ENCODE measurements at regions of chr10 and their contacts with region 1.

Region 1: GRCh38 chr10:43689955-43690771 is 41.5 kb upstream of the ZNF32 start:
- DNase-seq: peak; percentile 67 to 85
- H3K4me3 ChIP-seq: peak overlapping the region; percentile 42 to 76 (median 56)
- H3K27ac ChIP-seq: peak overlapping the region; percentile 82 to 87
- H3K4me1 ChIP-seq: no peaks in the 10 kb centered on the region
- H3K27me3 ChIP-seq: no peaks in the 10 kb centered on the region
- CTCF ChIP-seq: peak; percentile 85 to 97 (median 88)
- POLR2A ChIP-seq: no peak

Region 2: DNA sequence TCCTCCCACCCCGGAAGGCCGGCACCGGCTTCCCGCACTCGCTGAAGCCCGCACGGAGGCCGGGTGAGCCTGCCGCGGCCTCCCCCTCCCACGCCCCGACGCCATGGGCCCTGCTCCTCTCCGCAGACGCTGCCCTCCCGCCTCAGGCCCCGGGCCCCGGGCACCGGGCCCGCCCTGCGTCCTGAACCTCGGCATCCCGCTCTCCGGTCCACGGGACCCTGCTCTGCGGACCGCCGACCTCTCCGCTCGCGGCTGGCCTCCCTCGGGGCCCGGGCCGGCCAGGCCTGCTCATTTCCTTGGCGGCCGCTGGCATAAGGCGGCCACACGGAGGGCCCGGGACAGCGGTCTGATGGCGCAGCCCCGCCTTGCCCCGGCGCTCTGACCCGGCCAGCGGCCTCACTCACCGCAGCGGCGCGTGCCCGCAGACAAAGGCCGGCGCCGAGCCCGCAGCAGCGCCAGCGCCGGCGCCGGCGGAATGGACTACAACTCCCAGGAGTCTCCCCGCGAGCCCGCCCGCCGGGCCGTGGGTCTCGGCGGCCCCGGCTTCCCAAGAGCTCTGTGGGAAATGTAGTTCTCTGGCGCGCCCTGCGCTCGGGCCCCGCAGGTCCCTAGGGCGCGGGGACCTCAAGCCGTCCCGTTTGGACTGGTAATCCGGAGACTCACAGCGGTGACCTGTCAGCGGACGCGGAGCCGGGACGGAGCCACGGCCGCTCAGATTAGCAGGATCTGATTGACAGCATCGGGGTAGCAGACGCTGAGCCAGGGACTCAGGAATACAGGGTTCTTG is 41.6 kb before region 1 on chr10 and contains the start of gene ZNF32:
- intact Hi-C with region 1: no loop called
- DNase-seq: peak; percentile 66 to 71
- H3K4me3 ChIP-seq: peak within 1 kb of the TSS; percentile 76 to 95 (median 84)
- H3K27ac ChIP-seq: peak within 1 kb of the TSS; percentile 87 to 92
- H3K4me1 ChIP-seq: no peaks in the 10 kb centered on the region
- H3K27me3 ChIP-seq: no peaks in the 10 kb centered on the region
- CTCF ChIP-seq: no peak
- POLR2A ChIP-seq: no peak
- total RNA-seq, gene ZNF32: 53.1 to 74.3 (median 54.4) TPM

Region 3: DNA sequence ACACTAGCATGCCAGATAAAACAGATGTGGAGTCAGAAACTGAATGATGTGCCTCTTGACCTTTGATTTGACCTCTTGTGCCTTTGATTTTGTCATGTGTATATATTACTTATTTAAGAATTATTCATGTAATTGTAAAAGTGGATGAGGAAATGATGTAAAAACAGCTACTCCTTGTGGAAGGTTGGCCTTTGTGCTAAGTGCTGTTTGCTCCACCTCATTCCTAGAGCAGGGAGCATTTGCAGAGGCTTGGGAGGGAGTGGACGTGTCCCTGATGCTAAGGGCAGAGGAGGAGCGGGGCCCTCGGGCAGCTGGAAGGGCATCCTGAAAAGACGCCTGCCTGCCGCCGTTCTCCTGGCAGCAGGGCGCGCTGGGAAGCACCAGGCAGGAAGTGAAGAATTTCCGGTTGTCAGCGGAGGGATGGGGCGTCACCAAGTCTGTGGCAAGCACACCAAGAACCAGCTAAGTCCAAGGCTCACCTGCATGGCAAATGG is 156.1 kb after region 1 on chr10:
- intact Hi-C with region 1: no loop called
- DNase-seq: no peak
- H3K4me3 ChIP-seq: no peak overlapping the region
- H3K27ac ChIP-seq: peak overlapping the region in 1 of 2 donors; percentile 34
- H3K4me1 ChIP-seq: no peaks in the 10 kb centered on the region
- H3K27me3 ChIP-seq: no peaks in the 10 kb centered on the region
- CTCF ChIP-seq: no peak
- POLR2A ChIP-seq: no peak

Region 4: GRCh38 chr10:43867667-43868565 is 177.8 kb after region 1 on chr10:
- intact Hi-C with region 1: no loop called
- DNase-seq: no peak
- H3K4me3 ChIP-seq: no peak overlapping the region
- H3K27ac ChIP-seq: peak overlapping the region in 1 of 2 donors; percentile 27
- H3K4me1 ChIP-seq: peaks cover 2 to 9% of the 10 kb centered on the region in 2 donors
- H3K27me3 ChIP-seq: no peaks in the 10 kb centered on the region
- CTCF ChIP-seq: no peak
- POLR2A ChIP-seq: no peak

Region 5: GRCh38 chr10:44310762-44311562 is 620.8 kb after region 1 on chr10:
- intact Hi-C with region 1: loop called (anchors 10 kb)
- DNase-seq: peak; percentile 77 to 83
- H3K4me3 ChIP-seq: peak overlapping the region; percentile 20 to 62 (median 41)
- H3K27ac ChIP-seq: peak overlapping the region; percentile 50 to 60
- H3K4me1 ChIP-seq: peaks cover 0 to 9% of the 10 kb centered on the region in 2 donors
- H3K27me3 ChIP-seq: no peaks in the 10 kb centered on the region
- CTCF ChIP-seq: peak; percentile 73 to 96 (median 83)
- POLR2A ChIP-seq: no peak

Region 6: GRCh38 chr10:44715136-44715535 is 1025.0 kb after region 1 on chr10:
- intact Hi-C with region 1: no loop called
- DNase-seq: no peak
- H3K4me3 ChIP-seq: no peak overlapping the region
- H3K27ac ChIP-seq: no peak overlapping the region
- H3K4me1 ChIP-seq: no peaks in the 10 kb centered on the region
- H3K27me3 ChIP-seq: no peaks in the 10 kb centered on the region
- CTCF ChIP-seq: no peak
- POLR2A ChIP-seq: no peak

Measured in breast epithelium (tissue), 4 donors.